Activated CD4-positive, alpha-beta T cell treated with anti-CD3 and anti-CD28 coated beads for 36 hours (primary cell): ENCODE measurements at regions of chr7 and their contacts with region 1.

Region 1: DNA sequence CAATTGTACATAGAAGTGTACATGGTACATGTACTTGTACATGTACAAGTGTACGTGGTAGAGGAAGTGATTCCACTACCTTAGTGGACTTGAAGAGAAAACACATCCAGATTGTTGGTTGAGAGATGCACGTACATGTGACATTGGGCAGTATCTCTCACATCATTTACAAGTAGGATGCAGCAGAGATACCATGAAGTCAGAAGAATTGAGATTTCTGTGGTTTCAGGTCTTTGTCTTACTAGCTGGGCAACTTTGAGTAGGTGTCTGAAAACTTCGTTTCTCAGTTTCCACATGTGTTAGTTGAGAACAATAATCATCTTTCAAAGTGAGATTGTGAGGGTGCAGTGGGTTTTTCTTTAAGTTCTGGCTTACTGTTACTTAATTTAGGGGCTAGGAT is 21.5 kb downstream of the CLDN12 start:
- DNase-seq: no peak
- ATAC-seq: peak; percentile 93
- H3K4me3 Mint-ChIP-seq: no peak overlapping the region
- H3K27ac Mint-ChIP-seq: peak overlapping the region; percentile 48
- H3K4me1 Mint-ChIP-seq: peaks cover 18% of the 10 kb centered on the region
- H3K27me3 Mint-ChIP-seq: peaks cover 3% of the 10 kb centered on the region

Region 2: GRCh38 chr7:88789480-88790064 is 1635.1 kb before region 1 on chr7:
- CTCF ChIA-PET with region 1: no interaction called
- POLR2A ChIA-PET with region 1: no interaction called
- intact Hi-C with region 1: loop called in 1 of 2 experiments (anchors 5 kb)
- DNase-seq: no peak
- ATAC-seq: no peak
- H3K4me3 Mint-ChIP-seq: no peak overlapping the region
- H3K27ac Mint-ChIP-seq: no peak overlapping the region
- H3K4me1 Mint-ChIP-seq: no peaks in the 10 kb centered on the region
- H3K27me3 Mint-ChIP-seq: no peaks in the 10 kb centered on the region

Region 3: GRCh38 chr7:90244909-90245851 is 179.5 kb before region 1 on chr7 and contains the start of gene CFAP69:
- CTCF ChIA-PET with region 1: interaction called, 3 read pairs
- POLR2A ChIA-PET with region 1: no interaction called
- intact Hi-C with region 1: loop called in 1 of 2 experiments (anchors 1 kb)
- DNase-seq: peak; percentile 92
- ATAC-seq: peak; percentile 97
- H3K4me3 Mint-ChIP-seq: peak within 1 kb of the TSS; percentile 77
- H3K27ac Mint-ChIP-seq: peak within 1 kb of the TSS; percentile 0
- H3K4me1 Mint-ChIP-seq: peaks cover 16% of the 10 kb centered on the region
- H3K27me3 Mint-ChIP-seq: peaks cover 32% of the 10 kb centered on the region
- total RNA-seq, gene CFAP69: 0.25 to 0.70 TPM

Region 4: DNA sequence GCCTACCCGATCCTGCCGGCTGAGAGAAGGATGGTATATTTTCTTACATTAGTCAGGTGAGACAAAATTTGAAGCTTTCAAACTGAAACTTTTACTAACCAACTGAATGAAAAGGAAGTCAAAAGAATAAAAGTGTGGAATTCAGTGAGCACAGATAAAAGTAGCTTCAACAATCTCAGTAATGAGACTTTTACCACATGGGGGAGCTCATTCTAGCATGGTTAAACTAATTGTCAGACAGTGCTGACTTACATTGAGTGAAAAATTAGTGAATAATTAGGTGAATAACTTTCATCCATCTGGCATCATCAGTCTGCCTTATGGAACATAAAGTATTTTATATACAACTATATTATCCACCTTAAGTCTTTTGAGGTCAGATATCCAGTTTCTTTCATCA is 112.0 kb before region 1 on chr7:
- CTCF ChIA-PET with region 1: interaction called, 17 read pairs
- POLR2A ChIA-PET with region 1: no interaction called
- intact Hi-C with region 1: loop called (anchors 1 to 2 kb)
- DNase-seq: no peak
- ATAC-seq: no peak
- H3K4me3 Mint-ChIP-seq: no peak overlapping the region
- H3K27ac Mint-ChIP-seq: no peak overlapping the region
- H3K4me1 Mint-ChIP-seq: no peaks in the 10 kb centered on the region
- H3K27me3 Mint-ChIP-seq: peaks cover 14% of the 10 kb centered on the region

Region 5: GRCh38 chr7:90412458-90413184 is 12.1 kb before region 1 on chr7:
- CTCF ChIA-PET with region 1: interaction called, 11 read pairs
- POLR2A ChIA-PET with region 1: no interaction called
- intact Hi-C with region 1: no loop called
- DNase-seq: peak; percentile 48
- ATAC-seq: peak; percentile 49
- H3K4me3 Mint-ChIP-seq: no peak overlapping the region
- H3K27ac Mint-ChIP-seq: no peak overlapping the region
- H3K4me1 Mint-ChIP-seq: no peaks in the 10 kb centered on the region
- H3K27me3 Mint-ChIP-seq: no peaks in the 10 kb centered on the region

Region 6: GRCh38 chr7:90474284-90475210 is 49.8 kb after region 1 on chr7:
- CTCF ChIA-PET with region 1: no interaction called
- POLR2A ChIA-PET with region 1: no interaction called
- intact Hi-C with region 1: no loop called
- DNase-seq: no peak
- ATAC-seq: no peak
- H3K4me3 Mint-ChIP-seq: no peak overlapping the region
- H3K27ac Mint-ChIP-seq: no peak overlapping the region
- H3K4me1 Mint-ChIP-seq: no peaks in the 10 kb centered on the region
- H3K27me3 Mint-ChIP-seq: peaks cover 15% of the 10 kb centered on the region